HCT116 (cell line): ENCODE measurements at regions of chr15 and their contacts with region 1.

Region 1: GRCh38 chr15:84748274-84749110 is at the start of gene ZNF592:
- DNase-seq: no peak
- ATAC-seq: peak; percentile 78
- H3K4me3 ChIP-seq: peak within 1 kb of the TSS; percentile 98
- H3K27ac ChIP-seq: peak within 1 kb of the TSS; percentile 91
- H3K4me1 ChIP-seq: peaks cover 4 to 29% of the 10 kb centered on the region in 2 experiments; a peak in 3 of 4 replicates
- H3K27me3 ChIP-seq: no peaks in the 10 kb centered on the region
- CTCF ChIP-seq: 0 out of 6 replicates have a peak, but pooled peaks of 1 of the 3 experiments have one; percentile 5
- POLR2A ChIP-seq: peak; percentile 34
- RAD21 ChIP-seq: no peak
- total RNA-seq, gene ZNF592: 26.4 TPM

Region 2: GRCh38 chr15:84658080-84658787 is 90.3 kb before region 1 on chr15 and contains the start of gene NMB:
- CTCF ChIA-PET with region 1: no interaction called
- POLR2A ChIA-PET with region 1: no interaction called
- RAD21 ChIA-PET with region 1: no interaction called
- intact Hi-C with region 1: loop called (anchors 1 kb)
- DNase-seq: peak; percentile 24
- ATAC-seq: peak; percentile 50
- H3K4me3 ChIP-seq: peak within 1 kb of the TSS; percentile 31 to 56
- H3K27ac ChIP-seq: peak within 1 kb of the TSS; percentile 58
- H3K4me1 ChIP-seq: peaks cover 14 to 33% of the 10 kb centered on the region in 2 experiments
- H3K27me3 ChIP-seq: no peaks in the 10 kb centered on the region
- CTCF ChIP-seq: peak; percentile 14 to 30 (median 22); a peak in 3 of 6 replicates
- POLR2A ChIP-seq: no peak
- RAD21 ChIP-seq: no peak; the same call in 1 of the 2 replicates
- total RNA-seq, gene NMB: 9.8 TPM

Region 3: DNA sequence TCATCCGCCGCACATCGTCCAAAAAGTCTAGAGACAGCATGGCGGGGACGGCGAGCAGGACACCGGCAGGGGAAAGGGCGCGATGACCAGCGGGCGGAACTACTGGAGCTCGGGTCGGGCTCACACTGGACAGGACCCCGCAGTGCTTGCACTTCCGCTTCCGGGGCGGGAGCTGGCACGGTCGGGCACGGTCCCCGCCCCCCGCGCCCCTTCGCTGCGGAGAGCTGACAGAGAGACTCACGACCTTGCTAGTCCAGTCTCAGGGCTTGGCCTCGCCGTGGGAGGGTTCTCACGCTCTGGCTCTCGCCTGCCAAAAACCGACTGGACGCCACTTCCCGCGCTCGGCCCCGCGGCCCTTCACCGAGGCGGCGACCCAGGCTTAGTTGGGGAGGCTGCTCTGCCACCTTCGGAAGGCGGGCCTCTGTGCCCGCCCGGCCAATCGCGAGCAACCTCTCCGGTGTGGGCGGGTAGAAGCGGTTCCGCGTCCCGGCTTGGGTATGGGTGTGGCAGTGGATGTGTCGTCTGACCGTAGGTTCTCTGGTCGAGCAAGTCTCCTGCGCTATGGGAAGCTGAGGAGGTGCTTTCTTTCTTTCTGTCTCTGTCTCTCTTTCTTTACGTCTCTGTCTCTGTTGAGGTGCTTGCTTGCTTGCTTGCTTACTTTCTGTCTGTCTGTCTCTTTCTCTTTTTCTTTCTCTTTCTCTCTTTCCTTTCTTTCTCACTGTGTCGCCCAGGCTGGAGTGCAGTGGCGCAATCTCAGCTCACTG is 32.3 kb before region 1 on chr15 and contains the start of gene SEC11A:
- CTCF ChIA-PET with region 1: no interaction called
- POLR2A ChIA-PET with region 1: no interaction called
- RAD21 ChIA-PET with region 1: interaction called in 1 of 2 experiments, 3 read pairs
- intact Hi-C with region 1: loop called (anchors 1 kb)
- DNase-seq: peak; percentile 92
- ATAC-seq: peak; percentile 97
- H3K4me3 ChIP-seq: peak within 1 kb of the TSS; percentile 95 to 99
- H3K27ac ChIP-seq: peak within 1 kb of the TSS; percentile 97
- H3K4me1 ChIP-seq: peaks cover 8 to 24% of the 10 kb centered on the region in 2 experiments; a peak in 3 of 4 replicates
- H3K27me3 ChIP-seq: no peaks in the 10 kb centered on the region
- CTCF ChIP-seq: no peak
- POLR2A ChIP-seq: peak; percentile 96
- RAD21 ChIP-seq: no peak
- total RNA-seq, gene SEC11A: 175 TPM

Region 4: GRCh38 chr15:84734794-84735479 is 13.6 kb before region 1 on chr15:
- CTCF ChIA-PET with region 1: interaction called, 3 read pairs
- POLR2A ChIA-PET with region 1: interaction called, 12 read pairs
- RAD21 ChIA-PET with region 1: no interaction called
- intact Hi-C with region 1: no loop called
- DNase-seq: peak; percentile 85
- ATAC-seq: peak; percentile 87
- H3K4me3 ChIP-seq: peak overlapping the region; percentile 32 to 55
- H3K27ac ChIP-seq: peak overlapping the region; percentile 77
- H3K4me1 ChIP-seq: peaks cover 40 to 55% of the 10 kb centered on the region in 2 experiments
- H3K27me3 ChIP-seq: no peaks in the 10 kb centered on the region
- CTCF ChIP-seq: no peak
- POLR2A ChIP-seq: peak; percentile 42
- RAD21 ChIP-seq: peak; percentile 30; the same call in 1 of the 2 replicates

Region 5: DNA sequence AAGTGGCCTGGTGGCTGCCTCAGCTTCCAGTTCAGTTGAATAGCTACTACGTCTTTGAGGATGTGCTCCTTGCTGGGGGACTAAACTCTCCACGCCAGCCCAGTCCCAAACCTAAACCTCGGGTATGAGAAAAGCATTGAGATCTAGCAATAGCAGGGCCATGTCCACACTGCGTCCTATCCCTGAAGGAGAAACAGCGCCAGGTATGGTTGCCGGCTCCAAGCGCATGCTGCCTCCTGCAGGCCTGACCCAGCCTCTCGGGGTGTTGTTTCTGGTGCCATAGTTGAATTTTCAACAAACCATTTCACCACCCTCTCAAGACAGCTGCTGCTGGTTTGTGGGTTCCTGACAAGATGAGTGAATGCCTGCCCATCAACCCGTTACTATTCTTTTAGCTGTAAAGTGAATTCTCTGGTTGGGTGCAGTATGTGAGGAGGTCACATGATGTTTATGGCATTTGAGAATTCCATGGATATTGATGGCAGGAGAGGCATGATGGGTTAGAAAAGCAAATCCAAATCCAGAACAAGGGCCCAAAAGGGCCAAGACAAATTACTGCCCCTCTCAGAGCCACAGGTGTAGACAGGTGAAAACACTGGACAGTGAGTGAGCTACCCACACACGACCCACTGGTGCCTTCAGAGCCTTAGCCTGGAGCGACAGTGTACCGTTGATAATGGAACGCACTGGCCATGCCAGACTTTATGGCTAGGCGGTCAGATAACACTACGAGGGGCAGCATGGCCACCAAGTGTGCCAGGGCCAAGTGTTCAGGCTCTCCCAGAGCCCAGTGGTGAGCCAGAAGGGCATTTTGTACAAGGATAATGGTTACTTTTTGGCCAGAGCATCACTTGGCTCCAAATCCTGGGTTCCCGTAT is 123.2 kb after region 1 on chr15:
- CTCF ChIA-PET with region 1: no interaction called
- POLR2A ChIA-PET with region 1: no interaction called
- RAD21 ChIA-PET with region 1: no interaction called
- intact Hi-C with region 1: no loop called
- DNase-seq: no peak
- ATAC-seq: no peak
- H3K4me3 ChIP-seq: no peak overlapping the region
- H3K27ac ChIP-seq: no peak overlapping the region
- H3K4me1 ChIP-seq: no peaks in the 10 kb centered on the region
- H3K27me3 ChIP-seq: no peaks in the 10 kb centered on the region
- CTCF ChIP-seq: peak in 1 of 3 experiments; percentile 11; a peak in 1 of 6 replicates
- POLR2A ChIP-seq: no peak
- RAD21 ChIP-seq: peak; percentile 45; the same call in 1 of the 2 replicates